HepG2 (cell line): ENCODE measurements at regions of chr18 and their contacts with region 1.

Region 1: GRCh38 chr18:51739044-51739666 is 541.7 kb upstream of the MEX3C start:
- DNase-seq: no peak
- ATAC-seq: no peak
- H3K4me3 ChIP-seq: no peak overlapping the region
- H3K27ac ChIP-seq: no peak overlapping the region
- H3K4me1 ChIP-seq: no peaks in the 10 kb centered on the region
- H3K27me3 ChIP-seq: no peaks in the 10 kb centered on the region
- CTCF ChIP-seq: no peak
- EP300 ChIP-seq: no peak
- POLR2A ChIP-seq: no peak
- RAD21 ChIP-seq: no peak

Region 2: DNA sequence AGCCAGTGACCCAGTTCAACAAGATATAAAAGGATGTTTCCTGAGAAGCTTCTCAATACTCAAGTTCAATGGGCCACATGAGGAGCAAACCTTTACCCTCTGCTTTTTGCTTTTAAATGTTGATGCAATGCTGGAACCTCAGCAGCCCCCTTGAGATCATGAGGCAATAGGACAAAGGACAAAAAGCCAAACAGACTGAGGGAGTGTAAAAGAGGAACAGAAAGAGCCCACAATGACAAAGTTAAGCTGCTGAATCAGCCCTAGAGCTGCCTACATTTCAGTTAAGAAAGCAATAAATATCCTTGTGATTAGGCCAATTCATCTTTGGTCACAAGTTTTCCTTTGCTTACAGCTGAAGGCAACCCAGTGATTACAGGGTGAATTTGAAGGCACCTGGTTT is 996.2 kb before region 1 on chr18:
- CTCF ChIA-PET with region 1: no interaction called
- POLR2A ChIA-PET with region 1: no interaction called
- in situ Hi-C with region 1: no loop called
- intact Hi-C with region 1: no loop called
- DNase-seq: no peak
- ATAC-seq: no peak
- H3K4me3 ChIP-seq: no peak overlapping the region
- H3K27ac ChIP-seq: no peak overlapping the region
- H3K4me1 ChIP-seq: peaks cover 6% of the 10 kb centered on the region
- H3K27me3 ChIP-seq: no peaks in the 10 kb centered on the region; a peak in 1 of 5 replicates
- CTCF ChIP-seq: no peak
- EP300 ChIP-seq: no peak
- POLR2A ChIP-seq: no peak
- RAD21 ChIP-seq: no peak

Region 3: DNA sequence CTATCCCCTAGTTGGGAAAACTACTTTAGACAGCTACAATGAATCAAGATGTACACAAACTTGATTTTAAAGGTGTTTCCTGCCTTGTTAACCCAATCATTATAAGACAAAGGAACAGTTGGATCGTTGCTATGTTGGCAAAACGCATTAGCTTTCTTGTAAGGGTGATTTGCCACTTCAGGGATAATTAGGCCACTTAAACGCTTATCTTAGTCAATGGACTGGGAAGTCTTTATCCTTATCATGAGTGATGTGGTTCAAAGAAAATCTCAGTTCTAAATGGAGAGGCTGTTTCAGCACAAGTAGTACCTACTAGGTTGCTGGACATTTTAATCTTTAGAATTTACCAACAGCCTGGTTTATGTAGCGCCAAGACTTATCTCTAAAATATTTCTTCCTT is 135.6 kb before region 1 on chr18:
- CTCF ChIA-PET with region 1: no interaction called
- POLR2A ChIA-PET with region 1: no interaction called
- in situ Hi-C with region 1: no loop called
- intact Hi-C with region 1: loop called (anchors 10 kb)
- DNase-seq: no peak
- ATAC-seq: no peak
- H3K4me3 ChIP-seq: no peak overlapping the region
- H3K27ac ChIP-seq: no peak overlapping the region
- H3K4me1 ChIP-seq: no peaks in the 10 kb centered on the region
- H3K27me3 ChIP-seq: no peaks in the 10 kb centered on the region
- CTCF ChIP-seq: no peak
- EP300 ChIP-seq: no peak
- POLR2A ChIP-seq: no peak
- RAD21 ChIP-seq: no peak

Region 4: GRCh38 chr18:51778115-51778514 is 39.0 kb after region 1 on chr18:
- CTCF ChIA-PET with region 1: no interaction called
- POLR2A ChIA-PET with region 1: no interaction called
- in situ Hi-C with region 1: no loop called
- intact Hi-C with region 1: no loop called
- DNase-seq: no peak
- ATAC-seq: no peak
- H3K4me3 ChIP-seq: no peak overlapping the region
- H3K27ac ChIP-seq: no peak overlapping the region
- H3K4me1 ChIP-seq: no peaks in the 10 kb centered on the region
- H3K27me3 ChIP-seq: no peaks in the 10 kb centered on the region
- CTCF ChIP-seq: no peak
- EP300 ChIP-seq: no peak
- POLR2A ChIP-seq: no peak
- RAD21 ChIP-seq: no peak